Endothelial cell of umbilical vein (primary cell): ENCODE measurements at regions of chr2 and their contacts with region 1.

Region 1: GRCh38 chr2:9770308-9771100 is 72.8 kb upstream of the TAF1B start:
- DNase-seq: peak; percentile 51
- H3K4me3 ChIP-seq: no peak overlapping the region
- H3K27ac ChIP-seq: no peak overlapping the region
- H3K4me1 ChIP-seq: no peaks in the 10 kb centered on the region
- H3K27me3 ChIP-seq: no peaks in the 10 kb centered on the region
- CTCF ChIP-seq: peak; percentile 68 to 77
- POLR2A ChIP-seq: no peak

Region 2: GRCh38 chr2:9555297-9556141 is 215.0 kb before region 1 on chr2 and contains the start of gene ADAM17:
- CTCF ChIA-PET with region 1: interaction called, 13 read pairs
- POLR2A ChIA-PET with region 1: no interaction called
- dilution Hi-C with region 1: no loop called
- intact Hi-C with region 1: no loop called
- DNase-seq: peak; percentile 97
- H3K4me3 ChIP-seq: peak within 1 kb of the TSS; percentile 43 to 89 (median 81)
- H3K27ac ChIP-seq: peak within 1 kb of the TSS; percentile 84
- H3K4me1 ChIP-seq: peaks cover 28% of the 10 kb centered on the region
- H3K27me3 ChIP-seq: no peaks in the 10 kb centered on the region
- CTCF ChIP-seq: peak; percentile 39
- POLR2A ChIP-seq: peak; percentile 89
- total RNA-seq, gene ADAM17: 52.9 and 57.1 TPM in 2 replicates

Region 3: GRCh38 chr2:9638532-9638931 is 132.0 kb before region 1 on chr2:
- CTCF ChIA-PET with region 1: interaction called, 17 read pairs
- POLR2A ChIA-PET with region 1: no interaction called
- dilution Hi-C with region 1: no loop called
- intact Hi-C with region 1: no loop called
- DNase-seq: peak; percentile 79
- H3K4me3 ChIP-seq: no peak overlapping the region
- H3K27ac ChIP-seq: no peak overlapping the region
- H3K4me1 ChIP-seq: peaks cover 19% of the 10 kb centered on the region
- H3K27me3 ChIP-seq: peaks cover 0 to 2% of the 10 kb centered on the region in 2 experiments
- CTCF ChIP-seq: no peak
- POLR2A ChIP-seq: no peak

Region 4: GRCh38 chr2:9753276-9753600 is 17.3 kb before region 1 on chr2:
- CTCF ChIA-PET with region 1: interaction called, 59 read pairs
- POLR2A ChIA-PET with region 1: no interaction called
- dilution Hi-C with region 1: no loop called
- intact Hi-C with region 1: no loop called
- DNase-seq: peak; percentile 84
- H3K4me3 ChIP-seq: no peak overlapping the region
- H3K27ac ChIP-seq: no peak overlapping the region
- H3K4me1 ChIP-seq: peaks cover 7% of the 10 kb centered on the region
- H3K27me3 ChIP-seq: peaks cover 14 to 18% of the 10 kb centered on the region in 2 experiments
- CTCF ChIP-seq: no peak
- POLR2A ChIP-seq: peak; percentile 27

Region 5: GRCh38 chr2:9799665-9800632 is 29.4 kb after region 1 on chr2:
- CTCF ChIA-PET with region 1: interaction called, 46 read pairs
- POLR2A ChIA-PET with region 1: no interaction called
- dilution Hi-C with region 1: no loop called
- intact Hi-C with region 1: no loop called
- DNase-seq: peak; percentile 82
- H3K4me3 ChIP-seq: no peak overlapping the region
- H3K27ac ChIP-seq: no peak overlapping the region
- H3K4me1 ChIP-seq: no peaks in the 10 kb centered on the region
- H3K27me3 ChIP-seq: no peaks in the 10 kb centered on the region
- CTCF ChIP-seq: peak; percentile 96 to 99
- POLR2A ChIP-seq: no peak

Region 6: DNA sequence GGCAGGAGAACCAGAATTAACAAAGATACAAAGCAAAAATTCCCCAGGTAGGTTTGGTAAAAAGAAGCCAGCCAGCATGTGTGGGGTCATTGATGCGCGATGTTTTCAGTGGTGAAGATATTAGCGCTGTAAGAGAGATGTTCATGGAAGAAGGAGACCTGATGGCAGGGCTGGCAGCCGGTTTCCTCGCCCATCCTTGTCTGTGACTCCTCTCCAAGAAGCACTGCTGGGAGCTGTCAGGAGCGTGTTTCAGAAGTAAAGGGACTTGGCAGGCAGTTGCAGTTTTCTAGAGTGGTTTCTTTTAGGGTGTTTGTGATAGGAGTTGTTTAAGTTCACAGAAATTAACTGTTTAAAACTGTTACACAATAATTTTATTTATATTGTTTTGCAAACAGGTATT is 97.4 kb after region 1 on chr2:
- CTCF ChIA-PET with region 1: no interaction called
- POLR2A ChIA-PET with region 1: no interaction called
- dilution Hi-C with region 1: no loop called
- intact Hi-C with region 1: no loop called
- DNase-seq: no peak
- H3K4me3 ChIP-seq: no peak overlapping the region
- H3K27ac ChIP-seq: no peak overlapping the region
- H3K4me1 ChIP-seq: no peaks in the 10 kb centered on the region
- H3K27me3 ChIP-seq: no peaks in the 10 kb centered on the region
- CTCF ChIP-seq: no peak
- POLR2A ChIP-seq: no peak

Region 7: DNA sequence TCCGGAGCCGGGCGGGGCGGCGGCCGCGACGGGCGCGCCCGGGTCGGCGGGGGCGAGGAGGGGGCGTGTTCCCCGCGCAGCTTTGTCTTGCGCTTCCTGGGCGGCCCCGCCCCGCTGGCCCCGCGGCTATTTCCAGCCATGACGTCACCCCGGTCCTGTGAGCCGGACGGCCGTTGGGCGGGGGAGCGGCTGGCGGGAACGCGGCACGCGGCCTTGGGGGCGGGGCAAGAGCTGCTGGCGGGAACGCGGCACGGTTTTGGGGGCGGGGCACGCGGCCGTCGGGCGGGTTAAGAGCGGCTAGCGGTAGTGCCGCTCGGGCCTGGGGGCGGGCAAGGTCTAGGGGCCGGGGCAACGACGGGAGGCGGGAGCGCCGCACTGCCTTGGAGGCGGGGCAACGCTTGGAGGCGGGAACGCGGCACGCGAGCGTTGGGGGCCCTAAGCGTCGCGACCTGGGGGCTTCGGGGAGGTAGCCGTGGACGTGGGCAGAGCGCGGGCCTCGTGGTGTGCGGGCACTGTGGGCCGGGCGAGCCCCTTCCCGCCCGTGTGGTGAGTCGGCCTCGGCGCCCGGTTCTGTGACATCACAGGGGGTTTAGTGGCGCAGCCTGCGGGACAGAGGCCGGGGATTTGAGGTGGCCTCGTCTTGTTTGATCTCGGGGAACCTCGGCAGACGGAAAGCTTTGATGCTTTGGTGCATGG is 273.6 kb after region 1 on chr2:
- CTCF ChIA-PET with region 1: interaction called, 55 read pairs
- POLR2A ChIA-PET with region 1: no interaction called
- dilution Hi-C with region 1: no loop called
- intact Hi-C with region 1: no loop called
- DNase-seq: peak; percentile 92
- H3K4me3 ChIP-seq: peak overlapping the region in 2 of 3 experiments; percentile 31 to 75
- H3K27ac ChIP-seq: peak overlapping the region; percentile 70
- H3K4me1 ChIP-seq: peaks cover 4% of the 10 kb centered on the region
- H3K27me3 ChIP-seq: no peaks in the 10 kb centered on the region
- CTCF ChIP-seq: no peak
- POLR2A ChIP-seq: no peak

Region 8: GRCh38 chr2:10097352-10098148 is 327.0 kb after region 1 on chr2:
- CTCF ChIA-PET with region 1: interaction called, 43 read pairs
- POLR2A ChIA-PET with region 1: no interaction called
- dilution Hi-C with region 1: no loop called
- intact Hi-C with region 1: no loop called
- DNase-seq: peak; percentile 54
- H3K4me3 ChIP-seq: no peak overlapping the region
- H3K27ac ChIP-seq: no peak overlapping the region
- H3K4me1 ChIP-seq: no peaks in the 10 kb centered on the region
- H3K27me3 ChIP-seq: peaks cover 0 to 1% of the 10 kb centered on the region in 2 experiments
- CTCF ChIP-seq: peak; percentile 87 to 95
- POLR2A ChIP-seq: no peak